K562 (cell line): ENCODE measurements at regions of chr16 and their contacts with region 1.

Region 1: DNA sequence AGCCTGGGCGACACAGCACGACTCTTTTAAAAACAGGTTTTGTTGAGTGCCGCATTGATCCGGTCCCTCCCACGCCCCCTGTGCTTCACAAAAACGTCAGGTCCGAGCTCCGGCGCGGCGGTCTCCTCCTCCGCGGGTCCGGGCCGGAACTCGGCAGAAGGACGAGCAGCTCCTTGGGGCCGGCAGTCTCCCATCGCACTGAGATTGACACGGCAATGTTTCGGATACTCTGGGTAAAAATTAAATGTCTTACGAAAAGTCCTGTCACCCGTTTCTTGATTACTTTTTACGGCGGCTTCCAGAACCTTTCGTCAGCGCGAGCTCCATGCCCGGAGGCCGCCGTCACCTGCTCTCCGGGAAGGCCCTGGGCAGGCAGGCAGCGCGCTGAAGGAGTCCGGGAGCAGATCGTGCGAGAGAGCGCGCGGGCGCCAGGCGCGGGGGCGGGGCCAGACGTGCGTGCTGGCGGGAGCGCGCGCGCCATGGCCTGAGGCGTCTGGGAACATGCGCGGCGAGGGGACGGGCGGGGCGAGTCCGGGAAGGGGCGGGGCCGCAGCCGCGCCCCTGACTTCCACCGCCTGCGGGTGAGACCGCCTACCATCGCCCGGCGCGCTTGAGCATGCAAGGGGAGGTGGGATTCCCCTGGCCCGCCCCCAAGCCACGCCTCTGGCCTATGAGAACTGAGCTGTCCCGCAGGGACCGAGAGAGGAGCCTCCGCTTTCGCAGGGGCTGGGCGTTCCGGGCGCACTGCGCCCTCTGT is 11.7 kb upstream of the SRL start:
- DNase-seq: peak; percentile 97 to 99 (median 98)
- ATAC-seq: peak; percentile 99
- H3K4me3 ChIP-seq: peak overlapping the region; percentile 55
- H3K27ac ChIP-seq: peak overlapping the region; percentile 81
- H3K4me1 ChIP-seq: peaks cover 12 to 36% of the 10 kb centered on the region in 2 experiments
- H3K27me3 ChIP-seq: no peaks in the 10 kb centered on the region
- CTCF ChIP-seq: no peak
- EP300 ChIP-seq: no peak
- POLR2A ChIP-seq: peak; percentile 96
- RAD21 ChIP-seq: peak; percentile 90 to 93; a peak in 3 of 4 replicates

Region 2: DNA sequence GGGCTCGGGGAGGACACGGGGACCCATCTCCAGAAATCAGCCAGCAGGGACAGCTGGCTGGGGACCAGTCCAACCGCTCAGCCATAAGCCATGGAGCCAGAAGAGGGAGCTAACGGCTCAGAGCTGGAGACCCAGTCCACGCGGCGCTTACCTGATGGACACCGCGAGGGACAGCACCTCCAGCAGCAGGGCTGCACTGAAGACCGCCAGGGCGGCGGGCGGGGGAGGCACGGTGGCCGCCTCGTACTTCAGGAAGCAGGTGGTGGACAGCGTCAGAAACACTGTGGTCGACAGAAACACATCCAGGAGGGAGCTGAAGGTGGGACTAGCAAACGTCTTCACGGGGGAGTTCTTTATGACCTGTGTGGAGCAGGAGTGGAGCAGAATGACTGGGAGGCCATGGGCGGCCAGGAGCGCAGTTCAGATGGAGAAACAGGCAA is 270.5 kb before region 1 on chr16:
- CTCF ChIA-PET with region 1: interaction called, 10 read pairs
- POLR2A ChIA-PET with region 1: no interaction called
- in situ Hi-C with region 1: no loop called
- intact Hi-C with region 1: loop called (anchors 5 kb)
- DNase-seq: peak; percentile 78 to 82 (median 80)
- ATAC-seq: peak; percentile 99
- H3K4me3 ChIP-seq: no peak overlapping the region
- H3K27ac ChIP-seq: no peak overlapping the region
- H3K4me1 ChIP-seq: peaks cover 0 to 38% of the 10 kb centered on the region in 2 experiments; a peak in 3 of 5 replicates
- H3K27me3 ChIP-seq: peaks cover 61 to 97% of the 10 kb centered on the region in 2 experiments
- CTCF ChIP-seq: peak; percentile 84 to 95 (median 92)
- EP300 ChIP-seq: no peak
- POLR2A ChIP-seq: no peak
- RAD21 ChIP-seq: peak; percentile 74 to 90

Region 3: GRCh38 chr16:4152266-4152665 is 101.3 kb before region 1 on chr16:
- CTCF ChIA-PET with region 1: no interaction called
- POLR2A ChIA-PET with region 1: no interaction called
- in situ Hi-C with region 1: no loop called
- intact Hi-C with region 1: no loop called
- DNase-seq: no peak
- ATAC-seq: no peak
- H3K4me3 ChIP-seq: no peak overlapping the region
- H3K27ac ChIP-seq: no peak overlapping the region
- H3K4me1 ChIP-seq: no peaks in the 10 kb centered on the region; a peak in 1 of 5 replicates
- H3K27me3 ChIP-seq: peaks cover 12 to 30% of the 10 kb centered on the region in 2 experiments; a peak in 4 of 5 replicates
- CTCF ChIP-seq: no peak
- EP300 ChIP-seq: no peak
- POLR2A ChIP-seq: no peak
- RAD21 ChIP-seq: no peak